Ascending aorta (tissue), 2 donors: ENCODE measurements at regions of chr16 and their contacts with region 1.

Region 1: DNA sequence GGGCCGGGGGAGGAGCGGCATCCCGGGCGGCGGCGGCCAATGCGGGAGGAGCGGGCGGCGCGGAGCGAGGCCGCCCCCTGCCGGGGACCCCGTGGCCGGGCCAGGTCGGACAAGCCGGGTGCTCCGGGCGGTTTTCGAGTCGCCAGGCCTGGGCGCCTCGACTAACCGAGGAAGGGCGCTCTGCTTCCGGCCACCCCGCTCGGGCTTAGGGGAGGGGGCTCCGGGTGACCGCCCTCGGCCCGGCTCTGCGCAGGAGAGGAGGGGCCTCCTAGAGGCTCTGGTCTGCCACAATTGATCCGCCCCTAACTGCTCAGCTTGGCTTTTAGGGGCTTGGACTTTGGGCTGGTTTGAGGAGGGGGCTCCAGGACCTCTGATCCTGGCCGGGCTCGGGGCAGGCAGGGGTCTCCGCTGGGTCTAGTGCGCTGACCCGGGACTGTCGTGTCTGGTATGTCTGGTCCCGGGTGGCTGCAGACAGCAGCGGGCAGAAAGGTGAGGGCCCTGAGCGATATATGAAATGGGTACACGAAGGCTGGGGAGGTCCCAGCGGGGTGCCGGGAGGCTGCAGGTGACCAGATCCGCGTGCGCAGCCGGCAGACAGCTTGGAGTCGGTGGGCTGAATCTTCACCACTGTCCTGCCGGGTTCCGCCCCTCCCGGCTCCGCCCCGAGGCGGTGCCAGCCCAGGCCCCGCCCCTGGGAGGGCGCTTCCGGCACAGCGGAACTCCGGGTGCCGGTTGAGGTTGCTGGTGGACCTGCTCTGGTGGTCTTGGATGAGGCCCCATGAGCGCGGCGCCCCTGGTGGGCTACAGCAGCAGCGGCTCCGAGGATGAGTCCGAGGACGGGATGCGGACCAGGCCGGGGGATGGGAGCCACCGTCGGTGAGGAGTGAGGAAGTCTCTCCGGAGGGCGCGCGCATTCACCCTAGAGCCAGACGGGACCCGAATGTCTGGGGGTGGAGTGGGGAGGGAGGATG is at the start of gene USB1:
- DNase-seq: peak; percentile 37 to 90
- H3K4me3 ChIP-seq: peak within 1 kb of the TSS; percentile 78 to 93
- H3K27ac ChIP-seq: peak within 1 kb of the TSS; percentile 85 to 95
- H3K4me1 ChIP-seq: peaks cover 12 to 19% of the 10 kb centered on the region in 2 donors
- H3K27me3 ChIP-seq: no peaks in the 10 kb centered on the region
- CTCF ChIP-seq: peak; percentile 47 to 64 (median 63)
- total RNA-seq, gene USB1: 133 TPM

Region 2: DNA sequence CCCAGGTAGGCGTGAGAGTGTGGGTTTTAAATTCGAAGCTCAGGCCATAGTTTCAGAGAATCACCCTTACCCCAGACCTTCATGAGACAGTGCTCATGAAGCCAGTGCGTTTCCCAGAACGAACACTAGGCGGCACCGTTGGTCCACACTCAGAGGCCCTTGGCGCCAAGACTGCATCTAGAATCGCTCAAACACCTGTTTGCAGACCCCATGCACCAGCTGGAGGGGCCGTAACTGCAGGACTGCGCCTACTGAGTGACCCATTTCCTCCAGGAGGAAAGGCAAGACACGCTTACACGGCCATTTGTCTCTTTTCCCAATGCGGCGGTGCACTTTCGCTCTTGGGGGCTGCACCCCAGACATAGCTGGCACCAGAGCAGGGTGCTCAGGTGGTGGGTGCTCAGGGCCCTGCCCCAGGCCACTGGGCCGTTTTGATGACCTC is 424.5 kb before region 1 on chr16:
- intact Hi-C with region 1: loop called (anchors 1 kb)
- DNase-seq: peak in 1 of 2 donors; percentile 86
- H3K4me3 ChIP-seq: no peak overlapping the region
- H3K27ac ChIP-seq: no peak overlapping the region
- H3K4me1 ChIP-seq: no peaks in the 10 kb centered on the region
- H3K27me3 ChIP-seq: no peaks in the 10 kb centered on the region
- CTCF ChIP-seq: peak; percentile 68 to 92 (median 84)

Region 3: DNA sequence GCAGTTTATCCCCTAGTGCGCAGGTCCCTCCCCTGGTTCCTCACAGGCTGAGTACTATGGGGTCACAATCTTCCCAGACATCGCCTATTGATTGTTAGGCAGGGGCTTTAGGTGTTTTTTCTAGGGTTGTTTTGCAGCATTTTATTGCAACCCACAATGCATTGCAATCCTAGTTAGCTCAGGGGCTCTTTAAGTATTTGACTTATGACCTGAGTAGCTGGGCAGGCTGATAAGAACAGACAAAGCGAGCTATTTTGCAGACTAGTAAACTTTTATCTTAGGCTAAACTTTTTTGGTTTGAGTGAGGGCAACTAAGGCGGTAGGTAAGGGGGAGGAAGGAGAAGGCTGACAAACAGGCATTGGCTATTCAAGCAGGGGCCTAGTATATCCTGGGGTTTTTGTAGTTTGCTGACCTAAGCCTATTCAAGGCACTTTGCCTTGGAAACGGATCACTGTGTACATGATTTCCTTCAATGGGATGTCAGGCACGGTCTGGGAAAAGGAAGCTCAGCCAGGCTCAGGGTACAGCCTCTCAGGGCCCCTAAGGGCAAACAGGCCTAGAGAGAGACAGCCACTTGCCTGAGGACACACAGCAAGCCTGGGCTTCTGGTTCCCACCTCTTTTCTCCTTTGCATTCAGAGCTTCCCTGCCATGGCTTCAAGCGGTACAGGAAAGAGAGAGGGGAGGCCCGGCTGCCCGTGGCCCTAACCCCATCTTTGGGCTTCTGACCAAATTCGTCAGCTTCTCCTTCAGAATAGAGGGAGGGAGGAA is 300.0 kb before region 1 on chr16:
- intact Hi-C with region 1: no loop called
- DNase-seq: peak in 1 of 2 donors; percentile 33
- H3K4me3 ChIP-seq: no peak overlapping the region
- H3K27ac ChIP-seq: no peak overlapping the region
- H3K4me1 ChIP-seq: no peaks in the 10 kb centered on the region
- H3K27me3 ChIP-seq: no peaks in the 10 kb centered on the region
- CTCF ChIP-seq: no peak

Region 4: DNA sequence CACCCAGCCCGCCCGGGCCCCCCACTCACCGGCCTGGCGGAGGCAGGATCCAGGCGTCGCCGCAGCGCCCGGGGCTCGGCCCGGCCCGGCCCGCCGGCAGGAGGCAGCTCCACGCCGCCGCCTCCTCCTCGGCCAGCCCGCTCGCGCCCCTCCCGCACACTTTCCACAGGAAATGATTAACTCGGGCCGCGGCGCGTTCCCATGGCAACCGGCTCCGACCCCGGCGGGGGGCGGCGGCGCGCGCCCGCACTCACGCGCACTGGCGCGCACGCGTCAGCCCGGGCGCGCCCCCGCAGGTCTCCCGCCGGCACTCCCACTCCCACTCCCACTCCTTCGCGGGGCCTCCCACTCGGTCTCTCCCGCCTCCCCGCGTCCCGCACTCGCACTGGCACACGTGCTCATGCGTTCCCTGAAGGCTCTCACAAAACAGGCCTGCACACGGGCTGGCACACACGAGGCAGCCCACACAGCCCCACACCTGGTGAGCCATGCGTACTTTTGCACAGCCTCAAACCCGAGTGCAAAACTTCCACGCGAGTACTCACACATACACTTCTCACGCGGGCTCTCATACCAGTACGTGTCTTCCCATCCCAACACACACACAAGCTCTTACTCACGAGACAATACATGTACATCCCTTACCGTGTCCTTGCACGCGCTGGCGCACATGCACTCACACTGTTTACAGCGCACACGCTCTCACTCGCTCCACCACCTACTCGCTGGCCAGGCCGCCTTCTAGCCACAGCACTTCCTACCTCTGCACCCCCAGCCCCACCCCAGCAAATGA is 198.5 kb before region 1 on chr16 and contains the start of gene KIFC3:
- intact Hi-C with region 1: loop called (anchors 2 kb)
- DNase-seq: peak; percentile 50 to 95
- H3K4me3 ChIP-seq: peak within 1 kb of the TSS; percentile 68 to 84
- H3K27ac ChIP-seq: peak within 1 kb of the TSS; percentile 81 to 85
- H3K4me1 ChIP-seq: peaks cover 3 to 28% of the 10 kb centered on the region in 2 donors
- H3K27me3 ChIP-seq: no peaks in the 10 kb centered on the region
- CTCF ChIP-seq: peak in 2 of 3 experiments; percentile 3 to 76
- total RNA-seq, gene KIFC3: 54.9 TPM

Region 5: DNA sequence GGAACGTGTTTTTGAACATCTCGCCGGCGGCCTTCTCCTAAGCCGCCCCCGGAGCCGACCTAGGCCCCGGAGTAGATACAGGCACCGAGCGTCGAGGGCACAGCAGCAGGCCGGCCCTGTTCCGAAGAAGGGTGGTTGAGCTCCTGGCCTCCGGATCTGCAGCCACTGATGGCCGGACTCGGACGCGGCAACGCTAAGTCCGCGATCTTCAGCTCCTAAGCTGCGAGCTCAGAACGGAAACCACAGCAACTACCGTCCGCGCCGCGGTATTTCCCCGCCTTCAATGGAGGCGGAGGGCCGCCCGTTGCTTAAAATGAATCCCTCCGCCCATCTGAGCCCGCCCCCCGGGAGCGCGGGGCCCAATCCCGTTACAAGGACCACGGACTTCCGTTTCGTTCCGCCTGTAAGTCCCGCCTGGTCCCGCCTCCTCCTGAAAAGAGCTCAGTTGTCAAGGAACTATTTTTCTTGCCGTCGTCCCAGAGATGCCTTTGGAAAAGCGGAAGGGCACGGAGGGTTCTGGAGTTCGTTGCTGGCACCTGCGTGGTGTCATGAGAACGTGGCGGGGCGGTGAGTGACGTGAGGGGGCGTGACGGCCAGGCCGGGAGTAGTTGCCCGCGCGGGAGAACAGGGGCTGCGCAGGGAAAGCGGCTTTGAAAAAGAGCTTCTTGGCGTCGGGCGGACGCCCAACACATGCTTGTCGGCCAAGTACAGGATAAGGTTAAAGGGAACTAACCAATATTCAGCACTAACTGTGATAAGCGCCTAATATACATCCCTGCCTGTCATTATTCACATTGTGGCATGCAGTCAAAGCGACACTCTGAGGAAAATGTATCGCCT is 128.3 kb after region 1 on chr16 and contains the start of gene CFAP20:
- intact Hi-C with region 1: loop called (anchors 1 kb)
- DNase-seq: peak; percentile 94 to 100
- H3K4me3 ChIP-seq: peak within 1 kb of the TSS; percentile 93 to 99
- H3K27ac ChIP-seq: peak within 1 kb of the TSS; percentile 84 to 91
- H3K4me1 ChIP-seq: peaks cover 17 to 33% of the 10 kb centered on the region in 2 donors
- H3K27me3 ChIP-seq: no peaks in the 10 kb centered on the region
- CTCF ChIP-seq: no peak
- total RNA-seq, gene CFAP20: 39.1 TPM

Region 6: GRCh38 chr16:58392215-58393137 is 391.5 kb after region 1 on chr16 and contains the start of gene GINS3:
- intact Hi-C with region 1: loop called (anchors 5 kb)
- DNase-seq: peak; percentile 12 to 93
- H3K4me3 ChIP-seq: peak within 1 kb of the TSS; percentile 87 to 92
- H3K27ac ChIP-seq: peak within 1 kb of the TSS; percentile 58 to 64
- H3K4me1 ChIP-seq: no peaks in the 10 kb centered on the region
- H3K27me3 ChIP-seq: no peaks in the 10 kb centered on the region
- CTCF ChIP-seq: no peak
- total RNA-seq, gene GINS3: 21.8 TPM